GM13976 (cell line): ENCODE measurements at regions of chr14 and their contacts with region 1.

Region 1: GRCh38 chr14:59126710-59127432 is 61.6 kb upstream of the DAAM1 start:
- DNase-seq: peak; percentile 56
- CTCF ChIP-seq: peak; percentile 53

Region 2: DNA sequence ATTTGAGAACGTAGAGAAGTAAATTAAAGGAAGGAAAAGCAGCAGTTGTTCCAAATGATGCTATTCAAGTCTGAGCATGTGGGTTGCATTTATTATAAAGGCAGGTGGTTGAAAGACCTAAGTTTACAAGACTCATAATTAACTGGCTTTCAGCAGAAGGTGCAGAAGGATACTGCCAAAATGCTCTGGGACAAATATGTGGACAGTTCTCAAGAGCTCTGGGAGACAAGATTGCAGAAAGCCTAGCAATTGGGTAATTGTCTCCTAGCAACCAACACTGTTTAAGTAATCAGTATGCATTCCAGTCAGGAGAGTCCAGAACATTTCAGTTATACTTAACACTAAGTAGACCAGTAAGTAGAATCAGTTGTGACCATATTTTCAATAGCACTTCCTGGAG is 206.8 kb after region 1 on chr14:
- in situ Hi-C with region 1: no loop called
- DNase-seq: no peak
- CTCF ChIP-seq: no peak

Region 3: DNA sequence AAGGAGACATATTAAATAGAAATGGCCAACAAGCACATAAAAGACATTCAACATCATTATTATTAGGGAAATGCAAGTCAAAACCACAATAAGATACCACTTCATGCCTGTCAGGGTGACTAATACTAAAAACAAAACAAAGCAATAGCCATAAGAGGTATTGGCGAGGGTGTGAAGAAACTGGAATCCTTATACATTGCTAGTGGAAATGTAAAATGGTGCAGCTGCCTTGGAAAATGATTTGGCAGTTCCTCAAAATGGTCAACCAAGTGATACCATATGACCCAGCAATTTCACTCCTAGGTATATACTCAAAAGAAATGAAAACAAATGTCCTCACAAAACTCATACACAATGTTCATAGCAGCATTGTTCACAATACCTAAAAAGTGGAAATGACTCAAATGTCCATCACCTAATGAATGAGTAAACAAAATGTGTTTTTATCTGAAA is 311.4 kb after region 1 on chr14:
- in situ Hi-C with region 1: loop called (anchors 5 kb)
- DNase-seq: no peak
- CTCF ChIP-seq: no peak

Region 4: DNA sequence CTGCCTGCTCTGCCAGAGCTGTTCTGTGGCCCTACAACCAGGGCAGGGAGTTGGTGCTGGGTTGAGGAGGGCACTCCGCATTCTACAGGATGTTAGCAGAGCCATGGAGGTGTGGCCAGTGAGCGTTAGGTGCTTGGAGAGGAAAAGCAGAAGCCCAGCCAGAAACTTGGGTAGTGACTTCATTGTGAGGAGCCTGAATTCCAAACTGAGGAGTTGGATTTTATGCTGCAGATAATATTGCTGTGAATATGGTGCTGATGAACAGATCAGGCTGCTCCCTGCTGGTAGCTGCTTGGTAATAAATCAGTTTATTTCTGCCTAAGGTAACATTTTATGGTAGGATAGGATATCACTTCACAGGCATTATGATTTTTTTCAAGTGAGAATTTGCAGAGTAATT is 456.9 kb after region 1 on chr14:
- in situ Hi-C with region 1: loop called (anchors 10 kb)
- DNase-seq: no peak
- CTCF ChIP-seq: no peak

Region 5: GRCh38 chr14:59677771-59678231 is 550.9 kb after region 1 on chr14:
- in situ Hi-C with region 1: no loop called
- DNase-seq: no peak
- CTCF ChIP-seq: no peak